Head of caudate nucleus (tissue), 42 donors: ENCODE measurements at regions of chr3 and their contacts with region 1.

Region 1: DNA sequence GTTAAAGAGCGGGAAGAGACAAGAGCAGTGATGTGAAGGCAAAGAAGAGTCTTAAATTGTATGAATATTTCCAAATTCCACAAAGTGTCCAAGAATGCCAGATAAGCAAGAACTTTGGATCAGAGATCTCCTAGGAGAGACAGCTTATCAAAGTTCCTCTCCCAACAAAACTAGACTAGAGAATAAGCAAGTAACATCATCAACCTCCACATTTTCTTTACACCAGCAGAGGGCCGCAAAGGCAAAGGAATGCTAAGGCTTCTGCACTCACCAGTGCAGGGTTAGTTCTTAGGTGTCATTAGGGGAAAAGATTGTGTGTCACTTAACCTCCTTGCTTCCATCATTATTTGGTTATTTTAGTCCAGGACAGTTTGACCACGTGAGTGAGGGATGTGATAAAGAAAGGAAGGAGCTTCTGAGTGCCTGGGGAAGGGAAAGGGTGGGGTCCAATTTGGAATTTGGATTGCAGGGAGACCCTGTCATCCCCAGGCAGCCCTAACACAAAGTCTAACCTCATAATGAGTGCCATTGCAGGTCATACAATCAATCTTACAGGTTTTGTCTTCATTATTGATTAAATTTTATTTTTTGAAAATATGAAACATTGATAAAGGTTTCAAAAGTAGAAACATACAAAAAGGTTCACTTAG is 7.5 kb upstream of the CMTM6 start:
- DNase-seq: peak; percentile 44 to 90 (median 78)

Region 2: DNA sequence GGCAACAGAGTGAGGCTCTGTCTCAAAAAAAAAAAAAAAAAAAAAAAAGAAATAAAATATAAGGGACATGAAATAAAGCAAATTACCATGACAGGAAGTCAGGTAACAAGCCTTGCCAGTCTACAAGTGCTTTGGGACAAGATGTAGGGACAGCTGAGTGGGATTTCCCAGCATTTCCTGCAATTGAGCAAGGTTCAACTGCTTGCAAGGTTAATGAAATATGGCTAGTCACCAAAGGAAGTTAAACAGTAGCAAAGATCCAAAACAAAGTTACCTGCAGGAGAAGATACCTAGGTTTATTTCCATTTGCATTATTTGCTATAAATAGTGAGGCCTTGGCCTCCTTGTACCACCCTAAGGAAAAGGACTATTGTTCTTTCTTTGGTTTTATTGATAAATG is 152.4 kb after region 1 on chr3:
- intact Hi-C with region 1: loop called (anchors 5 kb)
- DNase-seq: no peak